Breast epithelium (tissue), 4 donors: ENCODE measurements at regions of chr15 and their contacts with region 1.

Region 1: DNA sequence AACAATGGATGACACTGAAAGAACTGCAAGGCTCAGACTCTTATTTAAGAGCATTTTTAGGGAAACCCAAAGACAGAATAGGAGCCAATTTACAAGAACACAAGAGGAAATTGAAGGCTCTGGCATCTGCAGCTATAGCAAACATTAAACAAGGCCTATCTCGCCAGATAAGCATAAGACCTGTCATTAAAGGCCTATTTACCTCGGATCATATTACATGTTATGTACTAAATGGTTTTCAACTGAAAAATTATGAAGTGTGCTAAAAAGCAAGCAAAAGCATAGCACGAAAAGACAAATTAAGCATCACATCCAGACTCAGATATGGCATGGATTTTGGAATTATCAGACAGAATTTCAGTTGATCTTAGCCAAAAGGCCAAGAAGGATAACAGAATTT is 617.1 kb downstream of the SQOR start:
- DNase-seq: no peak
- H3K4me3 ChIP-seq: no peak overlapping the region
- H3K27ac ChIP-seq: no peak overlapping the region
- H3K4me1 ChIP-seq: no peaks in the 10 kb centered on the region
- H3K27me3 ChIP-seq: no peaks in the 10 kb centered on the region
- CTCF ChIP-seq: no peak
- POLR2A ChIP-seq: no peak

Region 2: GRCh38 chr15:45821390-45821789 is 430.5 kb before region 1 on chr15:
- intact Hi-C with region 1: loop called (anchors 5 kb)
- DNase-seq: no peak
- H3K4me3 ChIP-seq: no peak overlapping the region
- H3K27ac ChIP-seq: no peak overlapping the region
- H3K4me1 ChIP-seq: no peaks in the 10 kb centered on the region
- H3K27me3 ChIP-seq: no peaks in the 10 kb centered on the region
- CTCF ChIP-seq: no peak
- POLR2A ChIP-seq: no peak

Region 3: GRCh38 chr15:46077220-46077619 is 174.7 kb before region 1 on chr15:
- intact Hi-C with region 1: no loop called
- DNase-seq: no peak
- H3K4me3 ChIP-seq: no peak overlapping the region
- H3K27ac ChIP-seq: no peak overlapping the region
- H3K4me1 ChIP-seq: no peaks in the 10 kb centered on the region
- H3K27me3 ChIP-seq: no peaks in the 10 kb centered on the region
- CTCF ChIP-seq: no peak
- POLR2A ChIP-seq: no peak